HepG2 (cell line): ENCODE measurements at regions of chr17 and their contacts with region 1.

Region 1: DNA sequence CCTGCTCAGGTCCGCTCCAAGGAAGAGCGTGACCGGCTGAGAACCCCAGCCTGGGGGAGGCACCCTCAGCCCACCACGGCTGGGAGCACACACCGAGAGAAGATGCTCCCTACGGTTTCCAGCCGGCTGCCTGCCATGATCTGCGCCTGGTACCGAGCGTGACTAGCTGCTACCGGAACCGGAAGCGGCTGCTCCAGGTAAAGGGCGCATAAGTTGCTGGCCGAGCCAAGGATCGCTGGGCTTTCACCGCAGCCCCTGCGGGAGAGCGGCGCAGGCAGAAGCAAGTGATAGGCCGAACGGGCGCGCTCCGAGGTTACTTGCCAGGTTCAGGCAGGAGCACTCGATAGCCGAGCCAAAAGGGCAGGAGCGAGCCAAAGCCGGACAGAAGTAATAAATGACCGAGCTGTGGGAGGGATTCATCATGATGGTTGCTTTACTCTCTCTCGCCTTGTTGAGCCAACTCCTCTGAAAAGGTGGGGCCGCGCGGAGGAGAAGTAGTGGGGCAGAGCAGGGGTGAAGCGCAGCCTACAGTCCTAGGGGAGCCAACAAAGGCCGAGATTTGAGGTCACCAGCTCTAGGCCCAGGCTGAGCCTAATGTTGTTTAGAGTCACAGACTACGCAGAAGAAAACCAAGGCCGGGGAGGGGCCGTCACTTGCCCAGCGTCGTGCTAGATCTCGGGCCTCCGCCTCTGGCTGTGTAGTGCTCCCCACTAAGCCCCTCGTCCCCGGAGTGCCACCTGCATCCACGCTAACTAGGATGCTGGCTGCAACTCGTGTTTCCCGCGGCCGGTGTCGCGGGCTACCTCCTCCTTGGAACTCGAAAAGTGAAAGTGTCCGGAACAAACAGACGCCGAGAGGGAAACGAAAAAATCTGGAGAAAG is at the start of gene MRPS23:
- DNase-seq: peak; percentile 99
- ATAC-seq: peak; percentile 82
- H3K4me3 ChIP-seq: peak within 1 kb of the TSS; percentile 88 to 93 (median 90)
- H3K27ac ChIP-seq: peak within 1 kb of the TSS; percentile 86
- H3K4me1 ChIP-seq: peaks cover 62% of the 10 kb centered on the region
- H3K27me3 ChIP-seq: no peaks in the 10 kb centered on the region; a peak in 1 of 5 replicates
- CTCF ChIP-seq: peak; percentile 34; the same call in 1 of the 2 replicates
- EP300 ChIP-seq: peak; percentile 55 to 76; a peak in 3 of 4 replicates
- POLR2A ChIP-seq: peak; percentile 80 to 86
- RAD21 ChIP-seq: peak; percentile 37; the same call in 1 of the 2 replicates
- total RNA-seq, gene MRPS23: 181 and 283 TPM in 2 replicates

Region 2: DNA sequence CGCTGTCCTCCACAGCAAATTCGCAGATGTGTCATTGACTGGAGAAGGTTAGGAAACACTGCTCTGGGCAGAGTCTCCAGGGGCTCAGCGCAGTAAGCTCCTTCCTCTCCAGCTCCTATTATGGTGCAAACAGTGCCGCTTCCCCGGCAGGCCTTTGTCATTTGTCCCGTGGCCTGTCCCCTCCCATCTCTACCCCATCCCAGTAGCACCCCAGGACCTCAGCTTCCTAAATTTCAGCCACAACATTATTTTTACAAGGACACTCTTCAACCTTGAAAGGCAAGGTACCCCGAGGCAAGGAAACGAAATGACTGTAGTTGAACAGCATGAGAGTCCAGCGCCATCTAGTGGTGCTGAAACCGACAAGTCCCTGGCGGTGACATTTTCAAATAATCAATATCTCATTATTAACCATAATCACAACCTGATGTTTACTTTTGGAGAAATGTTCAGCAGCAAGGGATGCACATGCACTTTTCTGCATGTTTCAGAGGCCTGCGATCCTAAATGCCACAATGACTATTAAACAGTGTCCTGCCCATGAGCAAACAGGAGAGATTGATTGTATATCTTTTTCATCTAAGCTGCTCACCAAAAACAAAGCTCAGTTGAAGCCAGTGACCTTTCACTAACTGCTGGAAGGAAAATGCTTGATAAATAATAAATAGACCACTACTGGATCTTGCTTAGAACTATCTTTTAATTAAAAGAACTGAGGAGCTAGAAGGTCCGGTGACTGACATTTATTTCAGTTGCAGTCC is 16.8 kb before region 1 on chr17:
- CTCF ChIA-PET with region 1: no interaction called
- POLR2A ChIA-PET with region 1: interaction called, 36 read pairs
- in situ Hi-C with region 1: no loop called
- intact Hi-C with region 1: loop called (anchors 1 kb)
- DNase-seq: peak; percentile 72
- ATAC-seq: peak; percentile 92
- H3K4me3 ChIP-seq: peak overlapping the region; percentile 54 to 74 (median 68)
- H3K27ac ChIP-seq: peak overlapping the region; percentile 41
- H3K4me1 ChIP-seq: peaks cover 69% of the 10 kb centered on the region
- H3K27me3 ChIP-seq: no peaks in the 10 kb centered on the region; a peak in 1 of 5 replicates
- CTCF ChIP-seq: peak; percentile 96
- EP300 ChIP-seq: peak in 1 of 2 experiments; percentile 53; a peak in 1 of 4 replicates
- POLR2A ChIP-seq: no peak
- RAD21 ChIP-seq: peak; percentile 73

Region 3: GRCh38 chr17:57861000-57861789 is 11.1 kb after region 1 on chr17:
- CTCF ChIA-PET with region 1: no interaction called
- POLR2A ChIA-PET with region 1: interaction called, 177 read pairs
- in situ Hi-C with region 1: no loop called
- intact Hi-C with region 1: no loop called
- DNase-seq: peak; percentile 94
- ATAC-seq: peak; percentile 56
- H3K4me3 ChIP-seq: peak overlapping the region; percentile 71 to 90 (median 81)
- H3K27ac ChIP-seq: peak overlapping the region; percentile 77
- H3K4me1 ChIP-seq: peaks cover 68% of the 10 kb centered on the region
- H3K27me3 ChIP-seq: no peaks in the 10 kb centered on the region; a peak in 1 of 5 replicates
- CTCF ChIP-seq: peak; percentile 26; the same call in 1 of the 2 replicates
- EP300 ChIP-seq: peak in 1 of 2 experiments; percentile 90; a peak in 2 of 4 replicates
- POLR2A ChIP-seq: peak; percentile 46 to 72; a peak in 2 of 4 replicates
- RAD21 ChIP-seq: no peak

Region 4: GRCh38 chr17:57875309-57876115 is 25.4 kb after region 1 on chr17:
- CTCF ChIA-PET with region 1: no interaction called
- POLR2A ChIA-PET with region 1: interaction called, 32 read pairs
- in situ Hi-C with region 1: no loop called
- intact Hi-C with region 1: no loop called
- DNase-seq: peak; percentile 93
- ATAC-seq: peak; percentile 85
- H3K4me3 ChIP-seq: peak overlapping the region in 1 of 3 experiments; percentile 15; a peak in 1 of 6 replicates
- H3K27ac ChIP-seq: peak overlapping the region; percentile 64
- H3K4me1 ChIP-seq: peaks cover 68% of the 10 kb centered on the region
- H3K27me3 ChIP-seq: no peaks in the 10 kb centered on the region
- CTCF ChIP-seq: peak; percentile 62
- EP300 ChIP-seq: peak in 1 of 2 experiments; percentile 51; a peak in 1 of 4 replicates
- POLR2A ChIP-seq: no peak
- RAD21 ChIP-seq: peak; percentile 60; the same call in 1 of the 2 replicates

Region 5: GRCh38 chr17:57995076-57995956 is 145.2 kb after region 1 on chr17:
- CTCF ChIA-PET with region 1: no interaction called
- POLR2A ChIA-PET with region 1: interaction called, 173 read pairs
- in situ Hi-C with region 1: no loop called
- intact Hi-C with region 1: no loop called
- DNase-seq: peak; percentile 87
- ATAC-seq: peak; percentile 78
- H3K4me3 ChIP-seq: no peak overlapping the region
- H3K27ac ChIP-seq: peak overlapping the region; percentile 4
- H3K4me1 ChIP-seq: peaks cover 57% of the 10 kb centered on the region
- H3K27me3 ChIP-seq: no peaks in the 10 kb centered on the region
- CTCF ChIP-seq: peak; percentile 93
- EP300 ChIP-seq: no peak
- POLR2A ChIP-seq: peak; percentile 41 to 80; a peak in 2 of 4 replicates
- RAD21 ChIP-seq: peak; percentile 89

Region 6: GRCh38 chr17:58066401-58066800 is 216.3 kb after region 1 on chr17:
- CTCF ChIA-PET with region 1: no interaction called
- POLR2A ChIA-PET with region 1: no interaction called
- in situ Hi-C with region 1: no loop called
- intact Hi-C with region 1: no loop called
- DNase-seq: no peak
- ATAC-seq: no peak; the same call in 2 of the 3 replicates
- H3K4me3 ChIP-seq: no peak overlapping the region
- H3K27ac ChIP-seq: no peak overlapping the region
- H3K4me1 ChIP-seq: no peaks in the 10 kb centered on the region
- H3K27me3 ChIP-seq: peaks cover 4 to 67% of the 10 kb centered on the region in 2 experiments; a peak in 3 of 5 replicates
- CTCF ChIP-seq: no peak
- EP300 ChIP-seq: no peak
- POLR2A ChIP-seq: no peak
- RAD21 ChIP-seq: no peak

Region 7: GRCh38 chr17:58112970-58113631 is 263.0 kb after region 1 on chr17:
- CTCF ChIA-PET with region 1: no interaction called
- POLR2A ChIA-PET with region 1: no interaction called
- in situ Hi-C with region 1: loop called (anchors 10 kb)
- intact Hi-C with region 1: no loop called
- DNase-seq: peak; percentile 70
- ATAC-seq: peak; percentile 84
- H3K4me3 ChIP-seq: no peak overlapping the region
- H3K27ac ChIP-seq: no peak overlapping the region
- H3K4me1 ChIP-seq: no peaks in the 10 kb centered on the region
- H3K27me3 ChIP-seq: peaks cover 1 to 4% of the 10 kb centered on the region in 2 experiments; a peak in 3 of 5 replicates
- CTCF ChIP-seq: peak; percentile 98
- EP300 ChIP-seq: no peak
- POLR2A ChIP-seq: no peak
- RAD21 ChIP-seq: peak; percentile 93